Activated CD4-positive, alpha-beta T cell treated with anti-CD3 and anti-CD28 coated beads for 36 hours (primary cell): ENCODE measurements at regions of chr6 and their contacts with region 1.

Region 1: DNA sequence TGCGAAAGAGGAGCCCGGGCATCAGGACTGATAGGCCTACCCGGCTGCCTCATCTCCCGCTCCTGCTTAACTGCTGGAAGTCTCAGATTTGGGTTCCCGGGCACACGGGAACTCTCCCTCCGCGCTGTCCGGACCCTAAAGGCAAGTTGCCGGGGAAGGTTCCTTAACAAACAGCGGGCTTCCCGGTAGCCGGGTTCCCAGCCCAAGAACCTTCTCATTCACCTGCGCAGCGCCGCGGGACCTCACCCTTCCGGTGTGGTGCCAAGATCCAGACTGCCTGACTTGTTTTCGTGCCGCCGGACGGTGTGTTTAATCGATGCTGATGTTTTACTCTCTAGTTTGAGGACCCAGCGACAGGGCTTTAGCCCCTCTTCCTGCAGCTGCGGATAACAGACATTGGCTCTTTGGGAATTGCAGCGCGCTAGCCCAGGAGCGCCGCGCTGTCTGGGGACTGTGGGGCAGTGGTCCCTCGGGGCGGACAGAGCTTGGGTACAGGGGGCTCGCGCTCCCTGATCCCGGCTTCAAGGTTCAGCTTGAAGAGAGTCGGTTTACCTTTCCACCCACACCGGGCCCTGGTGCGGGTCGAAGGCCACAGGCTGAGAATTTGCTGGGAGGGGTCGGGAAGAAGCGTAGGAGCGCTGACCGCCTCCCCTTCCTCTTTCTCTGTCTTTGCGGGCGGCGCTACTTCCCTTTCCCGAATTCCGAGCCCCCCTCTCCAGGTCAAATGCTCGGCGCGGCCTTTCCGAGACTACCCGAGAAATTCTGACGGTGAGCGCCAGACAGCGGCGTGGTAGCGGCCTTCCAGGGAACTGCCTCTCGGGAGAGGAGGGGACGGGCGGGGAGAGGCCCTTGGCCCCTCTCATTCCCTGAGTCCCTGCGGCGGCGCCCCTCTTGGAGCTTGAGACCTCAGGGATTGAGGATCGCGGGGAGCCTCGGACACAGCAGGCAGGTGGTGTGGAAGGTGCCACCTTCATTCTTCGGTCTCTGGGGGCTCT is 17.2 kb downstream of the ABT1 start:
- DNase-seq: peak; percentile 50
- ATAC-seq: peak; percentile 36
- H3K4me3 Mint-ChIP-seq: peak overlapping the region; percentile 67
- H3K27ac Mint-ChIP-seq: no peak overlapping the region
- H3K4me1 Mint-ChIP-seq: peaks cover 17% of the 10 kb centered on the region
- H3K27me3 Mint-ChIP-seq: peaks cover 24% of the 10 kb centered on the region

Region 2: GRCh38 chr6:26322645-26323482 is 291.1 kb before region 1 on chr6:
- CTCF ChIA-PET with region 1: no interaction called
- POLR2A ChIA-PET with region 1: no interaction called
- intact Hi-C with region 1: no loop called
- DNase-seq: peak; percentile 77
- ATAC-seq: peak; percentile 66
- H3K4me3 Mint-ChIP-seq: peak overlapping the region; percentile 84
- H3K27ac Mint-ChIP-seq: peak overlapping the region; percentile 93
- H3K4me1 Mint-ChIP-seq: peaks cover 28% of the 10 kb centered on the region
- H3K27me3 Mint-ChIP-seq: peaks cover 5% of the 10 kb centered on the region

Region 3: DNA sequence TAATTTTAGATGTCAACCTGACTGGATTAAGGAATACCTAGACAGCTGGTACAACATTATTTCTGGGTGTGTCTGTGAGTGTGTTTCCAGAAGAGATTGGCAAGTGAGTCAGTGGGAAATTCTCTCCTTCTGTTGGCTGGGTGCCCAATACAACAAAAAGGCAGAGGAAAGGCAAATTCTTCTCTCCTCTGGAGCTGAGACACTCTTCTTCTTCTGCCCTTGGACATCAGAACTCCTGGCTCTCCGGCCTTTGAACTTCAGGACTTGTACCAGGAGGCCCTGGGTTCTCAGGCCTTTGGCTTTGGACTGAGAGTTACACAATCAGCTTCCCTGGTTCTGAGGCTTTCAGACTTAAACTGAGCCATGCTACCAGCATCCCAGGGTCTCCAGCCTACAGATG is 219.7 kb before region 1 on chr6:
- CTCF ChIA-PET with region 1: no interaction called
- POLR2A ChIA-PET with region 1: no interaction called
- intact Hi-C with region 1: no loop called
- DNase-seq: no peak
- ATAC-seq: no peak
- H3K4me3 Mint-ChIP-seq: no peak overlapping the region
- H3K27ac Mint-ChIP-seq: no peak overlapping the region
- H3K4me1 Mint-ChIP-seq: peaks cover 1% of the 10 kb centered on the region
- H3K27me3 Mint-ChIP-seq: no peaks in the 10 kb centered on the region

Region 4: GRCh38 chr6:26457806-26458688 is 155.9 kb before region 1 on chr6 and contains the start of gene BTN2A1:
- CTCF ChIA-PET with region 1: no interaction called
- POLR2A ChIA-PET with region 1: no interaction called
- intact Hi-C with region 1: no loop called
- DNase-seq: peak; percentile 76
- ATAC-seq: peak; percentile 99
- H3K4me3 Mint-ChIP-seq: peak within 1 kb of the TSS; percentile 87
- H3K27ac Mint-ChIP-seq: peak within 1 kb of the TSS; percentile 97
- H3K4me1 Mint-ChIP-seq: peaks cover 45% of the 10 kb centered on the region
- H3K27me3 Mint-ChIP-seq: no peaks in the 10 kb centered on the region
- total RNA-seq, gene BTN2A1: 17.3 to 17.5 TPM

Region 5: DNA sequence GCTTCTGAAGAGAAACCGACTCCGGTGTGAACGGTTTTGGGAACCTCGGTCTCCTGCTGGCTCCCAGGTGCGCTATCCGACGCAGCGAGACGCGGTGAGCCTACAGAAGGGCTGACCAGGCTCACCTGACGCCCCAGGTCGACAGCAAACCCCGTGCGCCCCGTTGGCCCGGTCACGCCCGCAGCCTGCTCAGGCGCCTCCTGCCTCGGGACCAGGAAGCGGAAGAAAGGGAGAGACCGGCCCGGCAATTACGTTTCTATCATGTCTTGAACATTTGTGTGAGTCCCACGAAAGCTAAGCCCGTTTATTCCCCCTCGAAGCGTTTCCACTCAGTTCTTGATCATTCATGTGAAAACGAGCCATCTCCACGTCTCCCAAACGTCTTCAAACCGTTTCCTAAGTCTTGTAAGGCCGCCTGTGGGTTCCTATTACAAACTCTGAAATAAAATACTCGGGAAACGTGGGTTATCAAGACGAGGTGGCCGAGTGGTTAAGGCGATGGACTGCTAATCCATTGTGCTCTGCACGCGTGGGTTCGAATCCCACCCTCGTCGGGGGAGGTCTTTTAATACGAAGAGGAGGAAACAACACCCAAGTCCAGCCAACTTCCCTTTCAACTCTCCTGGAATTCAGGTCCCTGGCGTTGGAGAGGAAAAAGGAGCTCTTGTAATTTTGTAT is 483.0 kb after region 1 on chr6:
- CTCF ChIA-PET with region 1: no interaction called
- POLR2A ChIA-PET with region 1: no interaction called
- intact Hi-C with region 1: loop called in 1 of 2 experiments (anchors 5 kb)
- DNase-seq: peak; percentile 63
- ATAC-seq: peak; percentile 62
- H3K4me3 Mint-ChIP-seq: peak overlapping the region; percentile 71
- H3K27ac Mint-ChIP-seq: no peak overlapping the region
- H3K4me1 Mint-ChIP-seq: peaks cover 11% of the 10 kb centered on the region
- H3K27me3 Mint-ChIP-seq: peaks cover 51% of the 10 kb centered on the region